IMR-90 (cell line): ENCODE measurements at regions of chr15 and their contacts with region 1.

Region 1: GRCh38 chr15:52146776-52147175 is 34.2 kb upstream of the BCL2L10 start:
- DNase-seq: peak; percentile 44
- ATAC-seq: no peak
- H3K4me3 ChIP-seq: no peak overlapping the region
- H3K27ac ChIP-seq: no peak overlapping the region
- H3K4me1 ChIP-seq: peaks cover 9% of the 10 kb centered on the region
- H3K27me3 ChIP-seq: no peaks in the 10 kb centered on the region
- CTCF ChIP-seq: no peak
- POLR2A ChIP-seq: no peak
- RAD21 ChIP-seq: no peak

Region 2: DNA sequence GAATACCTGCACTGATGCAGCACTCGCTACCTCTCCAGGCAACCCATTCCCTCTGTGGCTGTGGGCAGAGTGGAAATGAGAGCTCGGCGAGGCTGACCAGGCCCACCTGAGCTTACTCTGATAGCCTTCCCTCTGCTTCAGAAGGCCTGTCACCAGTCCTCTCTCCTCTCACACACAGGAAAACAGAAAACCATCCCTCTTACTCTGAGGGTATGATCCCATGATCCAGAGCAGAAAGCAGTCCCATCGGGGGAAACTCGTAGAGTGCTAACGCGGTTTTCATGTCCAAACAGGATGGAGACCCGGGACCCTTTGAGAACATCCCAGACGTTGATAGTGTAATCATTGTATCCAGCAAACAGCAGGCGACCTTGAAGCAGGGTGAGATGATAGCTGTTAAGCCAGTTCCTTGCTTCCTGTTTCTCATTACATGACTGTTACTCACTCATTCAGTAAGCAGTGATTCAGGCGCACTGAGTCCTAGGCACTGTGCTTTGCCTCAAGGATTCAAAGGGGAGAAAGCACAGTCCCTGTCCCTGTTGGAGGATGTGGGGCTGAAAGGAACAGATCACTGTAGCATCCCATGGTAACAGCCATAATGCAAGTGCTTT is 22.4 kb before region 1 on chr15:
- CTCF ChIA-PET with region 1: no interaction called
- POLR2A ChIA-PET with region 1: no interaction called
- dilution Hi-C with region 1: no loop called
- in situ Hi-C with region 1: no loop called
- intact Hi-C with region 1: no loop called
- DNase-seq: peak; percentile 76
- ATAC-seq: peak; percentile 83
- H3K4me3 ChIP-seq: no peak overlapping the region
- H3K27ac ChIP-seq: peak overlapping the region; percentile 26; the same call in 1 of the 2 replicates
- H3K4me1 ChIP-seq: peaks cover 4% of the 10 kb centered on the region
- H3K27me3 ChIP-seq: no peaks in the 10 kb centered on the region
- CTCF ChIP-seq: no peak
- POLR2A ChIP-seq: no peak
- RAD21 ChIP-seq: no peak

Region 3: GRCh38 chr15:52163321-52164190 is 16.8 kb after region 1 on chr15:
- CTCF ChIA-PET with region 1: no interaction called
- POLR2A ChIA-PET with region 1: interaction called, 3 read pairs
- dilution Hi-C with region 1: no loop called
- in situ Hi-C with region 1: no loop called
- intact Hi-C with region 1: loop called (anchors 2 kb)
- DNase-seq: no peak
- ATAC-seq: no peak
- H3K4me3 ChIP-seq: no peak overlapping the region
- H3K27ac ChIP-seq: peak overlapping the region; percentile 91
- H3K4me1 ChIP-seq: peaks cover 16% of the 10 kb centered on the region
- H3K27me3 ChIP-seq: no peaks in the 10 kb centered on the region
- CTCF ChIP-seq: no peak
- POLR2A ChIP-seq: no peak
- RAD21 ChIP-seq: no peak